Posterior vena cava (tissue), 2 donors: ENCODE measurements at regions of chr13 and their contacts with region 1.

Region 1: GRCh38 chr13:49858183-49858856 is 65.8 kb upstream of the KPNA3 start:
- DNase-seq: no peak

Region 2: DNA sequence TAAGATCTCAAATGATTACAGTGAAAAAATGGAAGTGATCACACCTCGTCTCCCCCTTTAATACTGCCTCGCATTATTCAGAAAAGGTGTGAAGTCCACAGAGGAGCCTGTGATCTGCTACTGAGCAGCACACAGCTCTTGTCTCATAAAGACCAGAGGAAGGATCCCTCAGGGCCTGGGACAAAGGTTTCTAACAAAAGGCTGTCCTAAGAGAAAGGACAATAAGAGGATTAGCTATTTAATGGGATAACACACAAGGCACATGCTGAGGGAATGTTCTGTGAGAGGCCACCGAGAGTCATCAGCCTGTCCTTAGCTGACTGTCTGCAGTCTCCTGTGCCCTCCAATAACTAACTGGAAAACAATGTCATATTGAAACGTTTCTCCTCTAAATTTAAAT is 193.7 kb before region 1 on chr13:
- intact Hi-C with region 1: loop called in 1 of 2 experiments (anchors 5 kb)
- DNase-seq: no peak